Mammary epithelial cell (primary cell): ENCODE measurements at regions of chr14 and their contacts with region 1.

Region 1: GRCh38 chr14:105709281-105710118 is 183.1 kb downstream of the TMEM121 start:
- DNase-seq: no peak
- H3K4me3 ChIP-seq: no peak overlapping the region
- H3K27ac ChIP-seq: no peak overlapping the region
- H3K4me1 ChIP-seq: no peaks in the 10 kb centered on the region
- H3K27me3 ChIP-seq: no peaks in the 10 kb centered on the region
- CTCF ChIP-seq: no peak

Region 2: GRCh38 chr14:104116756-104117255 is 1592.7 kb before region 1 on chr14:
- CTCF ChIA-PET with region 1: no interaction called
- dilution Hi-C with region 1: no loop called
- in situ Hi-C with region 1: no loop called
- intact Hi-C with region 1: no loop called
- DNase-seq: peak; percentile 63
- H3K4me3 ChIP-seq: peak overlapping the region; percentile 55 to 66 (median 60)
- H3K27ac ChIP-seq: no peak overlapping the region
- H3K4me1 ChIP-seq: peaks cover 19% of the 10 kb centered on the region
- H3K27me3 ChIP-seq: peaks cover 14% of the 10 kb centered on the region
- CTCF ChIP-seq: no peak

Region 3: GRCh38 chr14:105589161-105590062 is 120.1 kb before region 1 on chr14:
- CTCF ChIA-PET with region 1: no interaction called
- dilution Hi-C with region 1: no loop called
- in situ Hi-C with region 1: loop called in 1 of 2 experiments (anchors 5 kb)
- intact Hi-C with region 1: no loop called
- DNase-seq: no peak
- H3K4me3 ChIP-seq: no peak overlapping the region
- H3K27ac ChIP-seq: no peak overlapping the region
- H3K4me1 ChIP-seq: no peaks in the 10 kb centered on the region
- H3K27me3 ChIP-seq: no peaks in the 10 kb centered on the region
- CTCF ChIP-seq: no peak

Region 4: GRCh38 chr14:105617201-105617777 is 92.2 kb before region 1 on chr14:
- CTCF ChIA-PET with region 1: no interaction called
- dilution Hi-C with region 1: no loop called
- in situ Hi-C with region 1: no loop called
- intact Hi-C with region 1: no loop called
- DNase-seq: no peak
- H3K4me3 ChIP-seq: no peak overlapping the region
- H3K27ac ChIP-seq: no peak overlapping the region
- H3K4me1 ChIP-seq: no peaks in the 10 kb centered on the region
- H3K27me3 ChIP-seq: no peaks in the 10 kb centered on the region
- CTCF ChIP-seq: no peak

Region 5: DNA sequence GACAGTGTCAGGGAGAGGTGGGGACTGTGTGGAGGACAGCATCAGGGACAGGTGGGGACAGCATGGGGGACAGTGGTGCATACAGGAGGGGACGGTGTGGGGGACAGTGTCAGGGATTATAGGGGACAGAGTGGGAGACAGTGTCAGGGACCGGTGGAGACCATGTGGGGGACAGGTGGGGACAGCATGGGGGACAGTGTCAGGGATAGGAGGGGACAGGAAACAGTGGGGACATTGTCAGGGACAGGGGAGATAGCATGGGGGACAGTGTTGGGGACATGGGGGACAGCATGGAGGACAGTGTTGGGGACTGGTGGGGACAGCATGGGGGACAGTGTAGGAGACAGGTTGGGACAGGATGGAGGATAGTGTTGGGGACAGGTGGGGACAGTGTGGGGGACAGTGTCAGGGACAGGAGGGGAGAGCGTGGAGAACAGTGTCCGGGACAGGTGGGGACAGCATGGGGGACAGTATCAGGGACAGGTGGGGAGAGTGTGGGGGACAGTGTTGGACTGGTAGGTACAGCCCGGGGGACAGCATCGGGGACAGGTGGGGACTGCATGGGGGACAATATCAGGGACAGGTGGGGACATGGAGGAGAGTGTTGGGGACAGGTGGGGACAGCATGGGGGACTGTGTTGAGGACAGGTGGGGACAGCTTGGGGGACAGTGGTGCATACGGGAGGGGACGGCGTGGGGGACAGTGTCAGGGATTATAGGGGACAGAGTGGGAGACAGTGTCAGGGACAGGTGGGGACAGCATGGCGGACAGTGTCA is 28.9 kb after region 1 on chr14:
- CTCF ChIA-PET with region 1: no interaction called
- dilution Hi-C with region 1: no loop called
- in situ Hi-C with region 1: no loop called
- intact Hi-C with region 1: no loop called
- DNase-seq: no peak
- H3K4me3 ChIP-seq: no peak overlapping the region
- H3K27ac ChIP-seq: no peak overlapping the region
- H3K4me1 ChIP-seq: no peaks in the 10 kb centered on the region
- H3K27me3 ChIP-seq: no peaks in the 10 kb centered on the region
- CTCF ChIP-seq: no peak